Heart left ventricle (tissue), 16 donors: ENCODE measurements at regions of chr12 and their contacts with region 1.

Region 1: GRCh38 chr12:575948-576612 is 87.2 kb downstream of the NINJ2 start:
- DNase-seq: peak; percentile 77 to 92 (median 82)
- ATAC-seq: peak; percentile 17 to 68 (median 52)
- H3K4me3 ChIP-seq: peak overlapping the region in 6 of 12 donors; percentile 12 to 34 (median 20)
- H3K27ac ChIP-seq: peak overlapping the region; percentile 11 to 98 (median 66)
- H3K4me1 ChIP-seq: peaks cover 15 to 71% (median 48%) of the 10 kb centered on the region in 12 donors
- H3K27me3 ChIP-seq: no peaks in the 10 kb centered on the region
- CTCF ChIP-seq: peak; percentile 98 to 100 (median 100)
- POLR2A ChIP-seq: no peak

Region 2: GRCh38 chr12:607526-608001 is 31.5 kb after region 1 on chr12:
- intact Hi-C with region 1: loop called in 1 of 10 experiments (anchors 2 kb)
- DNase-seq: peak; percentile 82 to 88 (median 84)
- ATAC-seq: peak; percentile 63 to 91 (median 64)
- H3K4me3 ChIP-seq: no peak overlapping the region
- H3K27ac ChIP-seq: peak overlapping the region; percentile 65 to 82 (median 76)
- H3K4me1 ChIP-seq: peaks cover 6 to 82% (median 36%) of the 10 kb centered on the region in 12 donors
- H3K27me3 ChIP-seq: no peaks in the 10 kb centered on the region
- CTCF ChIP-seq: no peak
- POLR2A ChIP-seq: no peak

Region 3: GRCh38 chr12:642633-643474 is 66.8 kb after region 1 on chr12:
- intact Hi-C with region 1: loop called (anchors 2 to 10 kb)
- DNase-seq: peak; percentile 83 to 93 (median 88)
- ATAC-seq: peak; percentile 9 to 78 (median 66)
- H3K4me3 ChIP-seq: peak overlapping the region; percentile 43 to 86 (median 74)
- H3K27ac ChIP-seq: peak overlapping the region; percentile 93 to 100 (median 99)
- H3K4me1 ChIP-seq: peaks cover 7 to 91% (median 54%) of the 10 kb centered on the region in 12 donors
- H3K27me3 ChIP-seq: no peaks in the 10 kb centered on the region
- CTCF ChIP-seq: peak in 11 of 12 donors; percentile 9 to 51 (median 34)
- POLR2A ChIP-seq: peak in 1 of 2 donors; percentile 28

Region 4: DNA sequence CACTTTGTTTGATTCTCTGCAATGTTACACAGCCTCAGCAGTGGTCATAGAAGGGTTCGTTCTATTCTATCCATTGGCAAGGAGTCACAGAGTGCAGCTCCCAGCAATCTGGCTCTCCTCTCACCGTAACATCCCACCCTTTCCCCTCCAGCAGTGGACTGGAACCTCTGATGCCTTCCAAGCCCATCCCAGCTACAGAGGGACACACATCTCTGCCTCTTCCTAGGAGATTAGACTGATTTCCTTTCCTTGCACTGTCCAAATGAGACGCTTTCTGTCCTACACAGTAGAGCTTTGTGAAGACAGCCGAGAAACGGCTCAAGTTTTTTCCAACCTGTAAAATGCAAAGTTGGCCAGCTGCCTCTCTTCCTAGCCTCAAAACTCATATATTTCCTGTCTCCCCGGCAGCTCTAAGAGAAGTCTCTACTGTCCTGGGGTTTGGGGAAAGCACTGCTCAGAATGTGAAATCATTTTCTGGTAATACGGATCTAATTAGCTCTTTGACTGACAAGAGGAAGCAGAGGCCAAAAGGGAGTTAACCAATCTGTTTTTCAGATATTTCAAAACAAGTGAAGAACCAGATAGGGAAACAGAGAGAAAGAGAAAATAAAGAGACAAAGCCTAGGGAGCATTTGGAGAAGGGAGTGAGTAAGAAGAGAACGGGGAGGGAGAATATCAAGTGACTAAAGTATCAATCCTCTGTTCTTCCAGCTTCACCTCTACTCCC is 86.6 kb after region 1 on chr12:
- intact Hi-C with region 1: no loop called
- DNase-seq: no peak
- ATAC-seq: peak; percentile 52 to 70 (median 64)
- H3K4me3 ChIP-seq: peak overlapping the region in 10 of 12 donors; percentile 22 to 50 (median 40)
- H3K27ac ChIP-seq: peak overlapping the region; percentile 32 to 85 (median 61)
- H3K4me1 ChIP-seq: peaks cover 0 to 42% (median 26%) of the 10 kb centered on the region in 12 donors
- H3K27me3 ChIP-seq: no peaks in the 10 kb centered on the region
- CTCF ChIP-seq: no peak
- POLR2A ChIP-seq: no peak

Region 5: GRCh38 chr12:810671-811415 is 234.8 kb after region 1 on chr12:
- intact Hi-C with region 1: loop called in 8 of 10 experiments (anchors 2 to 5 kb)
- DNase-seq: no peak
- ATAC-seq: peak in 2 of 4 donors; percentile 11 to 21
- H3K4me3 ChIP-seq: no peak overlapping the region
- H3K27ac ChIP-seq: peak overlapping the region in 1 of 12 donors; percentile 13
- H3K4me1 ChIP-seq: peaks cover 9 to 71% (median 44%) of the 10 kb centered on the region in 12 donors
- H3K27me3 ChIP-seq: no peaks in the 10 kb centered on the region
- CTCF ChIP-seq: no peak
- POLR2A ChIP-seq: no peak

Region 6: DNA sequence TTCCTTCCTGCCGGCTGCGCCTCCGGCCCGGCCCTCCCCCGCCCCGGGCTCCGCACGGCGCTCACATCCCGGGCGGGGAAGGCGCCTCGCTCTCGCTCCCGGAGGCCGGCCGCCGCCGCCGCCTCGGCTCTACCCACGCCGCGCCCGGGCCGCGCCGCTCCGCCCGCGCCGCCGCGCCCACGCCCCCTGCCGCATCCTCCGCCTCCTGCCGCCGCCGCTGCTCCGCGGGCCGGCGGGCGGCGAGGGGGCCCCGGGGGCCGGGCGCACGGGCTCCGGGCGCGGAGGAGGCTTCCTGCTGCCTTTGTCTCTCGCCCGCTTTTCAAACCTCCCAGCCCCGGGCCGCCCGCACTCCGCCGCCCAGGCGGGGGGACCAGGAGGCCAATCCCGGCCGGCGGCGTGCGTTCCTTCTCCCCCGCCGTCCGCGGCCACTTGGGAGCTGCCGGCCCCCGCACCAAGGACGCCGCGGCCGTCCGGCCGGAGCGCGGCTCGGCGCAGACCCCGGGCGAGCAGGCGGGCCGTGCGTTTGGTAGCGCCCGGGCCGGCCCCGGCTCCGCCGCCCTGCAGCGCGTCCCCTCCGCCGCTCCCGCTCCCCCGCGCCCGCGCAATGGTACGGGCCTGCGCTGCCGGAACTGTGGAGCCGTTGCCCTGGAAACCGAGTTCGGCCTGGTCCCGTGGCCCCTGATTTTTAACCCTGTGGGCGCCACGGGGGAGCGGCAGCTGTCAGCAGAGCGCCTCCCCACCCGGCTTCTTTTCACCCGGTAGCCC is 1018.4 kb after region 1 on chr12 and contains the start of gene FBXL14:
- intact Hi-C with region 1: loop called in 1 of 10 experiments (anchors 10 kb)
- DNase-seq: peak; percentile 93 to 95 (median 94)
- ATAC-seq: peak; percentile 74 to 83 (median 82)
- H3K4me3 ChIP-seq: peak within 1 kb of the TSS; percentile 58 to 99 (median 86)
- H3K27ac ChIP-seq: peak within 1 kb of the TSS; percentile 87 to 97 (median 93)
- H3K4me1 ChIP-seq: peaks cover 0 to 53% (median 39%) of the 10 kb centered on the region in 12 donors
- H3K27me3 ChIP-seq: no peaks in the 10 kb centered on the region
- CTCF ChIP-seq: peak in 1 of 12 donors; percentile 7
- POLR2A ChIP-seq: peak in 1 of 2 donors; percentile 40
- total RNA-seq, gene FBXL14: 4.7 to 10.1 (median 8.4) TPM